ENCODE measurements at regions of chr13 and their contacts with region 1.

Region 1: DNA sequence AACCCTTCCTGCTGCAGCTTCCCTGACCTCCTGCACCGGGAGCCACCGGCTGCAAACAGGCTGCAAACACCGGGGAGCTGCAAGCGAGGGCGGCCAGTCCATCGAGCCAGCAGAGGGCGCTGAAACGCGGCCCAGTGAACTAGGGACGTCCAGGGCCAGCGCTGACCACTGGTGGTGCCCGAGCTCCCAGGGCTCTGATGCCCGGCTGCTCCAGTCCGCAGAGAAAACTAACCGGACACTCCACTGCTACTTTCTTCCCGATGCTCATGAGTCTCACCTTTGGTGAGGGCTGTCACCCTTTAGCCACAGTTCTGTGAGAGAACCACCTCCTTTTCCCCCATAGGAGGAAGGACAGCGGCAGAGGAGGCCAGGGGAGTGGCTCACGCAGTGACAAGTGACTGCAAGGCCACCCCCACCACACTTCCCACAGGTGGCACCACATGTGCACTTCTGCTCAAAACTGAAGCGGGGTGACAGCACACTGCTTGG is 82.8 kb upstream of the MTIF3 start:
- DNase-seq: peak; percentile 90 to 94 (median 92)
- ATAC-seq: peak; percentile 98
- H3K4me3 ChIP-seq: no peak overlapping the region
- H3K27ac ChIP-seq: peak overlapping the region in 2 of 4 donors; percentile 49 to 57
- H3K4me1 ChIP-seq: peaks cover 7% of the 10 kb centered on the region
- H3K27me3 ChIP-seq: no peaks in the 10 kb centered on the region
- CTCF ChIP-seq: peak; percentile 92 to 99 (median 98)
- POLR2A ChIP-seq: no peak

Region 2: DNA sequence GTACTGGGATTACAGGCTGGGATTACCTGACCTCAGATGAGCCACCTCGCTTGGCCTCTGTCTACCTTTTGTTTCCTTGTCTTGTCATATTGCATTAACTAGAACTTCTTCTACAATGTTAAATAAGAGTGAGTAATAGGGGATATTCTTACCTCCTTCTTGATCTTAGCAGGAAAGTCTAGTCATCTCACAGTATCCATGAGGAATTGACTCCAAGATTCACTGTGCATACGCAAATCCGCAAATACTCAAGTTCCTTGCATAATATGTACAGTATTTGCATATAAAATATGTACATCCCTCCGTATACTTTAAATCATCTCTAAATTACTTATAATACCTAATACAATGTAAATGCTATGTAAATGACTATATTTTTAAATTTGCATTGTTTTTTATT is 166.8 kb after region 1 on chr13:
- intact Hi-C with region 1: no loop called
- DNase-seq: no peak
- ATAC-seq: no peak
- H3K4me3 ChIP-seq: no peak overlapping the region
- H3K27ac ChIP-seq: no peak overlapping the region
- H3K4me1 ChIP-seq: no peaks in the 10 kb centered on the region
- H3K27me3 ChIP-seq: no peaks in the 10 kb centered on the region
- CTCF ChIP-seq: no peak
- POLR2A ChIP-seq: no peak

Region 3: DNA sequence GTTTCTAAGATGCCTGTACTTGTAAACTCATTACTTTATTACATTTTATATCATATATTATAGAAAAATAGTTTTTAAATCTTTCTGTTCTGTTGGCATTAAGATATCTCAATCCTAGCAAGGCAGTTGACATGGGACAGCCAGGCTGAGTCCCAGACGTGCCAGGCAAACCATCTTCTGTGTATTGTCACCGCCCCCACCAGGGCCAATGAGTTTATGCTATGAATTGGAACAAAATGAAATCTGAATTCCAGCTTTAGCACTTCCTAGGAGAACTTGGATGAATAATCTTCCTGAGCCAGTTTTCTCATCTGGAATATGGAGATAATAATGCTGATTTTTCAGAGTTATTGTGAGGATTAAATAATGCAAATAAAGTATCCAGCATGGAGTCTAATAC is 179.2 kb after region 1 on chr13:
- intact Hi-C with region 1: loop called (anchors 10 kb)
- DNase-seq: peak; percentile 32 to 70 (median 48)
- ATAC-seq: no peak
- H3K4me3 ChIP-seq: no peak overlapping the region
- H3K27ac ChIP-seq: no peak overlapping the region
- H3K4me1 ChIP-seq: no peaks in the 10 kb centered on the region
- H3K27me3 ChIP-seq: no peaks in the 10 kb centered on the region
- CTCF ChIP-seq: peak in 5 of 7 experiments; percentile 23 to 64 (median 35)
- POLR2A ChIP-seq: no peak

Region 4: GRCh38 chr13:27765650-27766049 is 232.5 kb after region 1 on chr13:
- intact Hi-C with region 1: no loop called
- DNase-seq: no peak
- ATAC-seq: no peak
- H3K4me3 ChIP-seq: no peak overlapping the region
- H3K27ac ChIP-seq: no peak overlapping the region
- H3K4me1 ChIP-seq: no peaks in the 10 kb centered on the region
- H3K27me3 ChIP-seq: no peaks in the 10 kb centered on the region
- CTCF ChIP-seq: no peak
- POLR2A ChIP-seq: no peak